ENCODE measurements at regions of chr16 and their contacts with region 1.

Region 1: DNA sequence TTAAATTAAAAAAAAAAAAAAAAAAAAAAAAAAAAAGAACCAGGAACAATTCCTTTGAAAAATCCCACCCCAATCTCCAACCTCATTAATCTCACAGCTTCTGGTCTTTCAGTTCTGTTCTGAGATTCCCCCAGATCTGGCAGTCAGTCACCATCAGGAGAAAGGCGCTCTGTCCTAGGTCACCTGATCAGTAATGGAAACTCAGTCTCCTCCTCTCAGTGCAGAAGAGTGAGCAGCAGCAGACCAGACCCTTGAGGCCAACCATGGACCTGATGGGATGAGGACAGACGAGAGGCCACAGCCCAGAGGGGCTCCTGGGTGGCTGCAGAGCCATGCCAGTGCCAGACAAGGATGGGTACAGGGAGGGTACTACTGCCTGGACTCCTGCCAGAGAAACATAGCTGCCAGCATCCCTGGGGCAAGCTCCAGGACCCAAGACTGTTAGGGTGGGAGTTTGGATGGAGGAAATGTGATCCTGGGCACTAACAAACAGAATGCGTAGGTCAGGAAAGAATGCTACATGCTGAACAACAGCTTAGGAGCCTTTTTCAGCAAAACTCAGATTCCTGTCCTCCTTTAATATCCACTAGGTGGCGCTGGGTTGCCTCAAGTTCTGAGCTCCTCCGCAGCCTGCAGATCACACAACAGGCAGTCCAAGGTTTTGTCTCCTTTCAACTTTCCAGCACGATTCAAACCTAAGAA is 28.7 kb downstream of the MPG start:
- DNase-seq: peak; percentile 54 to 70
- H3K4me3 ChIP-seq: no peak overlapping the region
- H3K4me3 Mint-ChIP-seq: no peak overlapping the region
- H3K27ac Mint-ChIP-seq: no peak overlapping the region
- H3K4me1 ChIP-seq: no peaks in the 10 kb centered on the region
- H3K4me1 Mint-ChIP-seq: no peaks in the 10 kb centered on the region
- H3K27me3 ChIP-seq: no peaks in the 10 kb centered on the region
- H3K27me3 Mint-ChIP-seq: no peaks in the 10 kb centered on the region
- CTCF ChIP-seq: peak; percentile 67 to 76

Region 2: DNA sequence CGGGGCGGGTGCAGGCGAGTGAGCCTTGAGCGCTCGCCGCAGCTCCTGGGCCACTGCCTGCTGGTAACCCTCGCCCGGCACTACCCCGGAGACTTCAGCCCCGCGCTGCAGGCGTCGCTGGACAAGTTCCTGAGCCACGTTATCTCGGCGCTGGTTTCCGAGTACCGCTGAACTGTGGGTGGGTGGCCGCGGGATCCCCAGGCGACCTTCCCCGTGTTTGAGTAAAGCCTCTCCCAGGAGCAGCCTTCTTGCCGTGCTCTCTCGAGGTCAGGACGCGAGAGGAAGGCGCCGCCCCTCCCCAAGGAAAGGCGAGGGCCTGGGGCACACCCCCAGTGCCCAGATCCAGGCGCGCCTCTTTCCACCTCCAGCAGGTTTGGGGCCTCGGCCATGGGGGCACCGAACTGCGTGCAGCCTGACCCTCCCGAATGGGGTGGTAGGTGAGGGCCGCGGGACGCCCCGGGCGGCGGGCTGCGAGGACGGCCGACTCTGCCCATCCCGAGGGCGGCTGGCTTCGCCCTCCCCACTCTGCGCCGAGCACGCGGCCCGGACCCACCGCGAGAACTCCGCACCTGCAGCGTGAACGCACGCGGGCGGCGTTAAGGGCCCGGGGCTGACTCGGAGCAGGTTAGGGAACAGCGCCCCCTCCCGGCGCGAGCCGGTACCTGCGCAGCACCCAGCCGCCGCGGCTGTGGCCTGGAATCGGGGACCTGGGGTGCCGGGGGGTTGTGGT is 74.3 kb after region 1 on chr16:
- CTCF ChIA-PET with region 1: interaction called, 7 read pairs
- POLR2A ChIA-PET with region 1: no interaction called
- intact Hi-C with region 1: loop called (anchors 2 kb)
- DNase-seq: peak; percentile 86 to 92
- H3K4me3 ChIP-seq: peak overlapping the region; percentile 83
- H3K4me3 Mint-ChIP-seq: peak overlapping the region; percentile 64
- H3K27ac Mint-ChIP-seq: no peak overlapping the region
- H3K4me1 ChIP-seq: peaks cover 5% of the 10 kb centered on the region
- H3K4me1 Mint-ChIP-seq: no peaks in the 10 kb centered on the region
- H3K27me3 ChIP-seq: no peaks in the 10 kb centered on the region
- H3K27me3 Mint-ChIP-seq: no peaks in the 10 kb centered on the region
- CTCF ChIP-seq: peak; percentile 91 to 92

Region 3: DNA sequence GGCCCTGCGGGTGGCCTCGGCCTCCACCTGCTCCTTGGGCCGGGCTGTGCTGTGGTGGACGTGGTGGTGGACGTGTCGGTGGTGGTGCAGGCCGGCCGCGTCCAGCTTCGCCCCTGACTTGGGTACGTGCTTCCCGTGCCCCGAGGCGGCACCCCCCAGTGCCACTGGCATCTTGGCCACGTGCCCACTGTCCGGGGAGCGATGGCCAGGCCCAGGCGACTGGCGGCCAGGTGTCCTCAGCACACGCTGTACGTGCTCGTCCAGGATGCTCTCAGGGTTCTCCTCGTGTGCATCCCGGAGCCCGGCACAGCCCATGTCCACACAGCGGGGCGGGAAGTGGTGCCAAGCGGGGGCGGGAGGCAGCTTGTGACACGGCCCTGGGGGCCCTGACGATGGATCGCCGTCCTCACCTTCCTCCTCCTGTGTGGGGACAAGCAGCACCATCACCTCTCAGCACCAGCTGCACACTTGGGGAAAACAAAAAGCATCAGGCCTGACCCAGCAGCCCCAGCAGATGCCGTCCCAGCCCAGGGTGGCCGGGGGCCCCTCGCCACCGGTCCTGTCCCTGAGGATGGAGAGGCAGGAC is 191.2 kb after region 1 on chr16:
- CTCF ChIA-PET with region 1: no interaction called
- POLR2A ChIA-PET with region 1: no interaction called
- intact Hi-C with region 1: no loop called
- DNase-seq: no peak
- H3K4me3 ChIP-seq: no peak overlapping the region
- H3K4me3 Mint-ChIP-seq: no peak overlapping the region
- H3K27ac Mint-ChIP-seq: no peak overlapping the region
- H3K4me1 ChIP-seq: no peaks in the 10 kb centered on the region
- H3K4me1 Mint-ChIP-seq: no peaks in the 10 kb centered on the region
- H3K27me3 ChIP-seq: no peaks in the 10 kb centered on the region
- H3K27me3 Mint-ChIP-seq: no peaks in the 10 kb centered on the region
- CTCF ChIP-seq: no peak

Region 4: DNA sequence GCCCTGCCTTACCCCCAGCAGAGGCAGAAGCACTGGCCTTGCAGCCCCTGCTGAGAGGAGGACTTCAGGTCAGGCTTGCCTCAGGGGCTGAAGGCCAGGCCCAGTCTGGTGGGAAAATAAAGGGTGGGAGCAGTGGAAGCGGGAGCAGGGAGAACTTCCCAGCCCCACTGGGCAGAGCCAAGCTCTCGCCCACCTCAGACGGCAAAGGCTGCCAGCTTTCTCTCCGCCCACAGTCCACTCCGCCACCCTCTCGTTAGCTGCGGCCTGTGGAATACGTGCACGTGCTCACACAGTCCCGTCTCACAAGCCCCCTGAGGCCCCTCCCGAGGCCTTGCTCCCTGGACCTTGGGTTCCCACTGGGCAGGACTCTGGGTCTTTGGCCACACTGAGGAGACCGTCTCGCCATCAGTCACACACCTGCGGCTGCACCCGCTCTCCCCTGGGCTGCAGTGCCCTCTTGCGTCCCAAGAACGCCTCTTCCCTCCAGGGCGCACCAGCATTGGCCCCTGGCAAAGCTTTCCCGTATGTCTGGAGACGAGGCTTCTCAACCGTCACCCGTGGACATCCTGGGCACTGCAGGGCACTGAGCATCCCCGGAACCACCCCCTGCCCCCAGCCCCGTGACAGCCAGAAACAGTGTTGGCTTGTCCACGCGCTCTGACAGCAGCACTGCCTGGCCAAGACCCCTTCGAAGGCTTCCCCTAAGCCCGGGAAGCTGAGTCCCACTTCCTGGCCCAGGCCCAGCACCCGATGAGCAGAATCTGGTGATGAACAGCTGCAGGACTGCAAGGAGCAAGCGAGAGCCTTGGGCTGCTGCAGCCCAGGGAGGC is 255.3 kb after region 1 on chr16:
- CTCF ChIA-PET with region 1: interaction called, 9 read pairs
- POLR2A ChIA-PET with region 1: no interaction called
- intact Hi-C with region 1: loop called (anchors 1 kb)
- DNase-seq: peak; percentile 82 to 84
- H3K4me3 ChIP-seq: no peak overlapping the region
- H3K4me3 Mint-ChIP-seq: no peak overlapping the region
- H3K27ac Mint-ChIP-seq: no peak overlapping the region
- H3K4me1 ChIP-seq: no peaks in the 10 kb centered on the region
- H3K4me1 Mint-ChIP-seq: no peaks in the 10 kb centered on the region
- H3K27me3 ChIP-seq: no peaks in the 10 kb centered on the region
- H3K27me3 Mint-ChIP-seq: no peaks in the 10 kb centered on the region
- CTCF ChIP-seq: peak; percentile 73 to 91

Region 5: GRCh38 chr16:1244881-1245280 is 1138.1 kb after region 1 on chr16:
- CTCF ChIA-PET with region 1: no interaction called
- POLR2A ChIA-PET with region 1: interaction called, 12 read pairs
- intact Hi-C with region 1: no loop called
- DNase-seq: no peak
- H3K4me3 ChIP-seq: no peak overlapping the region
- H3K4me3 Mint-ChIP-seq: no peak overlapping the region
- H3K27ac Mint-ChIP-seq: no peak overlapping the region
- H3K4me1 ChIP-seq: no peaks in the 10 kb centered on the region
- H3K4me1 Mint-ChIP-seq: no peaks in the 10 kb centered on the region
- H3K27me3 ChIP-seq: no peaks in the 10 kb centered on the region
- H3K27me3 Mint-ChIP-seq: no peaks in the 10 kb centered on the region
- CTCF ChIP-seq: no peak